ENCODE measurements at regions of chr11 and their contacts with region 1.

Region 1: DNA sequence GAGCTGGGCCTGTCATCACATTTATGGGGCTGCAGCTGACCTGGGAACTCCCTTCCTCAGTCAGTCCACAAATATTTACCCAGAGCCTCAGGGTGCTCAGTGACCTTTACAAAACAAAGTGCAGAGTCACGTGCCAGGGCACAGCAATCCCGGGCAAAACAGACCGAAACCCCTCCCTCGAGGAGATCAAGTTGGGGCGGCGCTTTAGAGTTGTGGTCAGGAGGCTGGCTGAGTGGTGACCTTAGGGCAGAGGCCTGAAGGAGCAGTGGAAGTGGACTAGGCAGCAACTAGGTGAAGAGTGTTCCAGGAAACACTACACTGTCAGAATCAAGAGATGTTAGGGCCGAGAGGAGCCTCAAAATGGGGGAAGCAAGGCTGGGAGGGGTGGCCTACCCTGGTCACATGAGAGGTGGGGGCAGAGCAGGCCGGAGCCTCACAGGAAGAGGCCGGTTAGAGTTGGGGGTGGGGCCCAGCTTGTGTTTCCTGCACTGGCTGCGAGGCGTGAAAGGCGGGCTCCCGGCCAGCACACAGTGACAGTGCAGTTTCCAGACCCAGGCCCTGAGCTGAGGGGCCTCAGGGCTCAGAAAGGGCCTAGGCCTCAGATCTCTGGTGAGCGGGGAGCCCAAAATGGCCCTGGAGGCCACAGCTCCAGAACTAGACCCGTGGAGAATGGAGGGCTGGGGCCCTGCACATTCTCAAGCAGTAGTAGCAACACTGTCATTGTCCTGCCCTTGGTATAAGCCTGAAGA is 3.7 kb upstream of the NEAT1 start:
- DNase-seq: peak; percentile 97
- ATAC-seq: peak; percentile 48
- H3K4me3 Mint-ChIP-seq: peak overlapping the region; percentile 100
- H3K27ac Mint-ChIP-seq: peak overlapping the region; percentile 99
- H3K4me1 Mint-ChIP-seq: peaks cover 34% of the 10 kb centered on the region
- H3K27me3 Mint-ChIP-seq: peaks cover 6% of the 10 kb centered on the region

Region 2: GRCh38 chr11:65366340-65366773 is 52.5 kb before region 1 on chr11:
- CTCF ChIA-PET with region 1: interaction called, 3 read pairs
- POLR2A ChIA-PET with region 1: interaction called, 4 read pairs
- intact Hi-C with region 1: loop called (anchors 1 to 10 kb)
- DNase-seq: peak; percentile 48
- ATAC-seq: peak; percentile 72
- H3K4me3 Mint-ChIP-seq: no peak overlapping the region
- H3K27ac Mint-ChIP-seq: no peak overlapping the region
- H3K4me1 Mint-ChIP-seq: peaks cover 10% of the 10 kb centered on the region
- H3K27me3 Mint-ChIP-seq: no peaks in the 10 kb centered on the region

Region 3: GRCh38 chr11:65471410-65471762 is 52.5 kb after region 1 on chr11:
- CTCF ChIA-PET with region 1: interaction called, 21 read pairs
- POLR2A ChIA-PET with region 1: interaction called, 116 read pairs
- intact Hi-C with region 1: loop called in 1 of 2 experiments (anchors 1 kb)
- DNase-seq: peak; percentile 47
- ATAC-seq: no peak
- H3K4me3 Mint-ChIP-seq: peak overlapping the region; percentile 62
- H3K27ac Mint-ChIP-seq: peak overlapping the region; percentile 92
- H3K4me1 Mint-ChIP-seq: peaks cover 46% of the 10 kb centered on the region
- H3K27me3 Mint-ChIP-seq: no peaks in the 10 kb centered on the region

Region 4: GRCh38 chr11:65487413-65488272 is 68.8 kb after region 1 on chr11:
- CTCF ChIA-PET with region 1: interaction called, 14 read pairs
- POLR2A ChIA-PET with region 1: interaction called, 1,637 read pairs
- intact Hi-C with region 1: no loop called
- DNase-seq: peak; percentile 88
- ATAC-seq: peak; percentile 76
- H3K4me3 Mint-ChIP-seq: peak overlapping the region; percentile 42
- H3K27ac Mint-ChIP-seq: peak overlapping the region; percentile 88
- H3K4me1 Mint-ChIP-seq: peaks cover 59% of the 10 kb centered on the region
- H3K27me3 Mint-ChIP-seq: no peaks in the 10 kb centered on the region

Region 5: GRCh38 chr11:65506770-65507505 is 88.1 kb after region 1 on chr11:
- CTCF ChIA-PET with region 1: interaction called, 209 read pairs
- POLR2A ChIA-PET with region 1: interaction called, 1,637 read pairs
- intact Hi-C with region 1: loop called (anchors 1 kb)
- DNase-seq: peak; percentile 75
- ATAC-seq: peak; percentile 51
- H3K4me3 Mint-ChIP-seq: no peak overlapping the region
- H3K27ac Mint-ChIP-seq: no peak overlapping the region
- H3K4me1 Mint-ChIP-seq: peaks cover 60% of the 10 kb centered on the region
- H3K27me3 Mint-ChIP-seq: no peaks in the 10 kb centered on the region

Region 6: GRCh38 chr11:65548192-65548794 is 129.4 kb after region 1 on chr11:
- CTCF ChIA-PET with region 1: no interaction called
- POLR2A ChIA-PET with region 1: no interaction called
- intact Hi-C with region 1: no loop called
- DNase-seq: no peak
- ATAC-seq: no peak
- H3K4me3 Mint-ChIP-seq: peak overlapping the region; percentile 13
- H3K27ac Mint-ChIP-seq: peak overlapping the region; percentile 9
- H3K4me1 Mint-ChIP-seq: peaks cover 58% of the 10 kb centered on the region
- H3K27me3 Mint-ChIP-seq: no peaks in the 10 kb centered on the region

Region 7: DNA sequence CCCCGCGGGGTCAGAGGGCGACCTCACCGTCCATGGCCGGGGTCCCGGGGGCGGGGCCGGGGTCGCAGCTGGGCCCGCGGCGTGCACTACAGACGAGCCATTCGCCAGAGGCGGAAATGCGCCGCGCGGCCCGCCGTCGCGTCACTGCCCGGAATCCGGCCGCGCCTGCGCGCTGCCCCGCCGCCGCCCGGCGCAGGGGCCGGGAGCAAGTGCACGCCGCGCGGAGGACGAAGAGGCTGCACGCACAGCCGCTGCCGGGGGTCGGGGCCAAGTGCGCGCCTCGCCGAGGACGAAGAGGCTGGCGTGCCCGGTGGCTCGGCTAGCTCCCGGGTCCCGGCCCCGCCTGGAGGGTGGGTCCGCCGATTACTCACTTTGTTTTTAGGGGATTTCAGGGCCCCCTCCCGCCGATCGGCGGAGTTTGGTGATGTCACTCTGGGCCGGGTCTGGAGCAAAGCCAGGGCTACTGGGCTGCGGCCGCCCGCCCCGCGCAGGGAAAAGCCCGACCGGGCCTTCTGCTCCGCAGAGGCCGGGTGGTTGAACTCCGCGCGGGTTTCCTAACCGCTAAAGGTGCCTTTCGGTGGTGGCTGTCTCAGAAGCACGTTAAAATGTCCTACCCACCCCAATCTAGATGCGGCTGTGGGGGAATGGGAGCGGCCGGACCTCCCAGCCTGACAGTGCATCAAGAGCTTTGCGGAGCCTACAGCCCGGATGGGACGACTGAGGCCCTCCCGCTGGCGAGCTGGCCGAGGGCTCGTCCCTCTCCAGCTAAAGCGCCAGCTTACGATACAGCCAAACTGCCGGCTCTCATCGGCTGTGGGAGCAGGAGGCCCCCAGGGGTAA is 244.1 kb after region 1 on chr11 and contains the start of gene RELA:
- CTCF ChIA-PET with region 1: no interaction called
- POLR2A ChIA-PET with region 1: no interaction called
- intact Hi-C with region 1: loop called in 1 of 2 experiments (anchors 5 kb)
- DNase-seq: peak; percentile 96
- ATAC-seq: peak; percentile 90
- H3K4me3 Mint-ChIP-seq: peak within 1 kb of the TSS; percentile 88
- H3K27ac Mint-ChIP-seq: peak within 1 kb of the TSS; percentile 97
- H3K4me1 Mint-ChIP-seq: peaks cover 41% of the 10 kb centered on the region
- H3K27me3 Mint-ChIP-seq: no peaks in the 10 kb centered on the region
- total RNA-seq, gene RELA: 76.9 to 109 TPM

Measured in activated CD4-positive, alpha-beta T cell treated with anti-CD3 and anti-CD28 coated beads for 36 hours (primary cell).